ENCODE measurements at regions of chr5 and their contacts with region 1.

Region 1: DNA sequence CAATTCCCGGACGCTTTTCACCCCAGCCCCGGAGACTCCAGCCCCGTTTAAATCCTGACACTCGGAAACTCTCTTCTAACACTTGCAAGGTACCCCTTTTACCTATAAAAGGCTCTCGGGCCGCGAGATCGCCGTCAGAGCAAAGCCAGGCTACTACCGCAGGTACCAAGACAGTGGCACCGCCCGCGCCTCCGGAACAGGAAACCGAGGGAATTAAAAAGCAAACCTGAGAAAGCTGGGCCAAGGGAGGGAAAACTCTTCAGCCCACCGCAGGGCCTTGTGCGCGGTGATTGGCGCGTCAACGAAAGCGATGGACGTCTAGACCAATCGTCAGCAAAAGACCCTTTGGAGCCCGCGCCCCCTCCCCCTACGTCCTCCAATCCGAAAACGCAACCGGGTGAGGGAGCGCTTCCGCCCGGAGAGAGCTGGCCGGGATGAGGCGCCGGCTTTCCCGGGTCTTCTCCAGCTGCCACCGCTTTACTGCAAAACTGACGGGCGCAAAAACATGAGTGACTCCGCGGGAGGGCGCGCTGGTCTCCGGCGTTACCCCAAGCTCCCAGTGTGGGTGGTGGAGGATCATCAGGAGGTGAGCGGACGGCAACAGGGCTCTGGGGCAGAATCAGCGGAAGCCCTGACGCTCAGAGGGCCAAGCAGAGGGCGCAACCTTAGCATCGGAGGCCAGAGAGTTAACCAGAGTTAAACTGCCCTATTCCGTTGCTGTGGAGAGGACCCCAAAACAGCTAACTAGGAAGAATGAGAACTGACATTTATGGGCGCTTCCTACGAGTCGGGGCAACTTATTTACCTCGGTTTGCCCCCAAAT is at the starts of genes C5orf22 and DROSHA:
- DNase-seq: peak; percentile 97
- H3K4me3 Mint-ChIP-seq: peak within 1 kb of the TSS; percentile 100
- H3K27ac Mint-ChIP-seq: peak within 1 kb of the TSS; percentile 94
- H3K4me1 Mint-ChIP-seq: peaks cover 23% of the 10 kb centered on the region
- H3K27me3 Mint-ChIP-seq: no peaks in the 10 kb centered on the region
- CTCF ChIP-seq: no peak
- total RNA-seq, gene C5orf22: 18.5 and 19.6 TPM in 2 replicates
- total RNA-seq, gene DROSHA: 57.7 and 70.6 TPM in 2 replicates

Region 2: DNA sequence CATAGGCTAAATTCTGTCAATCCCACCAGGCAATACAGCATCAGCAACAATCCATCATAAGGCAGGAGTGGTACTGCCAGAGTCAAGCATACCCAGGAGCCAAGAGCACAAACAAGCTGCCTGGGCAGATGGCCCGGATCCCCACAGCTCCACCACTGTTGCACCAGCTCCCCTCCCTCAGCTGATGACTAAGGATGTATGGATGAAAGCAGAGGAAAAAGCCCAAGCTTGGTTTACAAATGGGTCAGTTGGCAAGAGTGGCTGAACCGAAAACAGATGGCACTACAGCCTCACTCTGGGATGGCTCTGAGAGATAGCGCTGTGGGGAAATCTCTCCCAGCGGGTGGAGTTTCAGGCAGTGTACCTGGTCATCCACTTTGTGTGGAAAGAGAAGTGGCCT is 29.6 kb before region 1 on chr5:
- CTCF ChIA-PET with region 1: no interaction called
- POLR2A ChIA-PET with region 1: no interaction called
- intact Hi-C with region 1: no loop called
- DNase-seq: no peak
- H3K4me3 Mint-ChIP-seq: no peak overlapping the region
- H3K27ac Mint-ChIP-seq: no peak overlapping the region
- H3K4me1 Mint-ChIP-seq: no peaks in the 10 kb centered on the region
- H3K27me3 Mint-ChIP-seq: no peaks in the 10 kb centered on the region
- CTCF ChIP-seq: no peak

Region 3: GRCh38 chr5:31516802-31517201 is 15.3 kb before region 1 on chr5:
- CTCF ChIA-PET with region 1: interaction called, 3 read pairs
- POLR2A ChIA-PET with region 1: interaction called, 19 read pairs
- intact Hi-C with region 1: no loop called
- DNase-seq: no peak
- H3K4me3 Mint-ChIP-seq: no peak overlapping the region
- H3K27ac Mint-ChIP-seq: no peak overlapping the region
- H3K4me1 Mint-ChIP-seq: peaks cover 6% of the 10 kb centered on the region
- H3K27me3 Mint-ChIP-seq: no peaks in the 10 kb centered on the region
- CTCF ChIP-seq: no peak